ENCODE measurements at regions of chr22 and their contacts with region 1.

Region 1: DNA sequence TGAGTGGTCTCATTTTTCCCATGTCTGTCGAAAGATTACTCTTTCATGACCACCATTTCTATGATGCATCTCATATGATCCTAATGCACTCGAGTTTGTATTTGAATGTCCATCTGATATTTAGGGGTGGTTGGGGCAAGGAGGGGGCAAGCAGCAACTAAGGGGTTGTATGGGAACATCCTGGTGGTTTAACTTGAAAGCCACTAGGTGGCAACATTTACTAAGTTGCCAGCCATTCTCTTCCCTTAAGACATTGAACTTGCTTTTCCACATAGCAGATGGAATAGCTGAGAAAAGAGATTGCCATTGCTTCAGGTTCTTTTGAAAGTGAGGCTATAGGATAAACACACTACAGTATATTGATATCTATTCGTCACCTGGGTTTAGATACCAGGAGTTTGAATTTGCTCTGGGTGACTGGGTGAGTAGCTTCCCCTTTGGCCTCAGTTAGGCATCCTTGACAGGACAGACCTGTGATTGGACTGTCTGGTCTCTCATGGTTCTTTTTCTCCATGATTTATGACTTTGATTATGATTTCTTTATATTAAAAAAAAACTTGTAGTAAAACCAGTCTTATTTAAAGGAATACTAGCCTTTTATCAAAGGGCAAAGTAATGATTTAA is 32.4 kb downstream of the NF2 start:
- DNase-seq: no peak
- H3K4me3 ChIP-seq: no peak overlapping the region
- H3K27ac ChIP-seq: no peak overlapping the region
- H3K4me1 ChIP-seq: peaks cover 0 to 36% (median 10%) of the 10 kb centered on the region in 6 donors
- H3K27me3 ChIP-seq: no peaks in the 10 kb centered on the region
- CTCF ChIP-seq: peak in 9 of 11 experiments; percentile 18 to 58 (median 46)
- POLR2A ChIP-seq: no peak

Region 2: GRCh38 chr22:30005213-30005857 is 369.5 kb after region 1 on chr22:
- intact Hi-C with region 1: loop called (anchors 10 kb)
- DNase-seq: no peak
- H3K4me3 ChIP-seq: no peak overlapping the region
- H3K27ac ChIP-seq: no peak overlapping the region
- H3K4me1 ChIP-seq: peaks cover 0 to 19% (median 7%) of the 10 kb centered on the region in 6 donors
- H3K27me3 ChIP-seq: no peaks in the 10 kb centered on the region
- CTCF ChIP-seq: peak; percentile 77 to 97 (median 92)
- POLR2A ChIP-seq: no peak

Region 3: DNA sequence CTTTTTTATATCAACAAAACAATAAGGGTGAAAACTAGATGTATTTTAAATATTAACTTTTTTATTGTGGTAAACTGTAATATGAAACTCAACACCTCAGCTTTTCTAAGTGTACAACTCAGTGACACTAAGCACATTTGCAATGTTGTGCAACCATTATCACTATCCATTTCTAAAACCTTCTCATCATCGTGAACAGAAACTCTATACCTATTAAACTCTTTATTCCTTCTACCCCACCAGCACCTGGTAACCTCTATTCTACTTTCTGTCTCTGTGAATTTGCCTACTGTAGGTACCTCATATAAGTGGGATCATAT is 453.8 kb after region 1 on chr22:
- intact Hi-C with region 1: loop called (anchors 5 kb)
- DNase-seq: no peak
- H3K4me3 ChIP-seq: no peak overlapping the region
- H3K27ac ChIP-seq: no peak overlapping the region
- H3K4me1 ChIP-seq: peaks cover 0 to 10% (median 0%) of the 10 kb centered on the region in 6 donors
- H3K27me3 ChIP-seq: peaks cover 0 to 9% (median 0%) of the 10 kb centered on the region in 7 donors
- CTCF ChIP-seq: no peak
- POLR2A ChIP-seq: no peak